Heart left ventricle (tissue), 16 donors: ENCODE measurements at regions of chr6 and their contacts with region 1.

Region 1: DNA sequence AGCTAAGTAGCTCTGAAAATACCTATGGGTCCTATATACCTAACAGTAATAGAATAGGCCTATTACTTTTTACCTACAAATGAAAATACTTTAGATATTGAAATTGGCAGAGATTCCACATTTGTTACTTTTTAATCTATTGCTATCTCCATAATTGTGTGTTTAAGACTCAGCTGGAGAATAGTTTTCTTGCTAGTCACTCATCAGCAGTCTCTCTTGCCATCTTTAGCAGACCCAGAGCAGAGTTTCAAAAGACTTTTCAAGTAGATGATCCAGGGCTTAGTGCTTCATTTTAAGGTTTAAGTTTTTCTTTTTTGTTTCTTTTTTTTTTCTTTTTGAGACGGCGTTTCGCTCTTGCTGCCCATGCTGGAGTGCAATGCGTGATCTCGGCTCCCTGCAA is 12.9 kb downstream of the ANKS1A start:
- DNase-seq: no peak
- ATAC-seq: no peak
- H3K4me3 ChIP-seq: no peak overlapping the region
- H3K27ac ChIP-seq: no peak overlapping the region
- H3K4me1 ChIP-seq: peaks cover 0 to 49% (median 19%) of the 10 kb centered on the region in 12 donors
- H3K27me3 ChIP-seq: no peaks in the 10 kb centered on the region
- CTCF ChIP-seq: no peak
- POLR2A ChIP-seq: no peak

Region 2: GRCh38 chr6:34964564-34964963 is 62.6 kb after region 1 on chr6:
- intact Hi-C with region 1: loop called in 1 of 10 experiments (anchors 10 kb)
- DNase-seq: peak in 2 of 5 donors; percentile 29 to 31
- ATAC-seq: peak; percentile 40 to 69 (median 53)
- H3K4me3 ChIP-seq: no peak overlapping the region
- H3K27ac ChIP-seq: peak overlapping the region in 10 of 12 donors; percentile 12 to 71 (median 54)
- H3K4me1 ChIP-seq: peaks cover 0 to 54% (median 42%) of the 10 kb centered on the region in 12 donors
- H3K27me3 ChIP-seq: no peaks in the 10 kb centered on the region
- CTCF ChIP-seq: no peak
- POLR2A ChIP-seq: no peak

Region 3: DNA sequence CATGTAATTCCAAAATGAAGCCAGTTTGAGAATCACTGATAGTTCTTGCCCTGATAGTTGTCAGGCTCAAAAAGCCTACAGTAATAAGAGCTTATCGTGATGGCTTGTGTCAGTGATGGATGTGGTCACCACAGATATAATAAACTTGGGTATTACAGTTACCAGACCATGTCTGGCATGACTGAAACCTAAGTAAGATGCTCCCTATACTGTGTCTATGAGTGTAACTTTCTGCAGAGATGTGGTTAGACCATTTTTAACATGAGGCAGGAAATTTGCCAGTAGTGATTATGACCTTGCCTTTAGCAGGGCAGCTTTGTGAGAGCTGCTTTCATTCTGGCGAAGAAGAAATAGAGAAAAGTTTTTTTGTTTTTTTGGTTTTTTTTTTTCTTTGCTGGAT is 77.3 kb after region 1 on chr6:
- intact Hi-C with region 1: no loop called
- DNase-seq: no peak
- ATAC-seq: peak in 2 of 4 donors; percentile 22 to 36
- H3K4me3 ChIP-seq: no peak overlapping the region
- H3K27ac ChIP-seq: peak overlapping the region in 4 of 12 donors; percentile 5 to 72 (median 8)
- H3K4me1 ChIP-seq: peaks cover 0 to 24% (median 6%) of the 10 kb centered on the region in 12 donors
- H3K27me3 ChIP-seq: no peaks in the 10 kb centered on the region
- CTCF ChIP-seq: no peak
- POLR2A ChIP-seq: no peak